ENCODE measurements at regions of chr17 and their contacts with region 1.

Region 1: GRCh38 chr17:7561028-7561575 is 617 bp upstream of the SENP3 start:
- H3K4me3 Mint-ChIP-seq: peak overlapping the region; percentile 97
- H3K27ac Mint-ChIP-seq: peak overlapping the region; percentile 96
- H3K4me1 Mint-ChIP-seq: peaks cover 86% of the 10 kb centered on the region
- H3K27me3 Mint-ChIP-seq: no peaks in the 10 kb centered on the region

Region 2: GRCh38 chr17:7435221-7435675 is 125.9 kb before region 1 on chr17 and contains the start of gene TMEM102:
- intact Hi-C with region 1: loop called (anchors 2 kb)
- H3K4me3 Mint-ChIP-seq: peak within 1 kb of the TSS; percentile 86
- H3K27ac Mint-ChIP-seq: peak within 1 kb of the TSS; percentile 90
- H3K4me1 Mint-ChIP-seq: peaks cover 39% of the 10 kb centered on the region
- H3K27me3 Mint-ChIP-seq: peaks cover 23% of the 10 kb centered on the region

Region 3: GRCh38 chr17:7515911-7516610 is 45.0 kb before region 1 on chr17:
- intact Hi-C with region 1: loop called (anchors 1 kb)
- H3K4me3 Mint-ChIP-seq: no peak overlapping the region
- H3K27ac Mint-ChIP-seq: peak overlapping the region; percentile 46
- H3K4me1 Mint-ChIP-seq: peaks cover 40% of the 10 kb centered on the region
- H3K27me3 Mint-ChIP-seq: no peaks in the 10 kb centered on the region

Region 4: DNA sequence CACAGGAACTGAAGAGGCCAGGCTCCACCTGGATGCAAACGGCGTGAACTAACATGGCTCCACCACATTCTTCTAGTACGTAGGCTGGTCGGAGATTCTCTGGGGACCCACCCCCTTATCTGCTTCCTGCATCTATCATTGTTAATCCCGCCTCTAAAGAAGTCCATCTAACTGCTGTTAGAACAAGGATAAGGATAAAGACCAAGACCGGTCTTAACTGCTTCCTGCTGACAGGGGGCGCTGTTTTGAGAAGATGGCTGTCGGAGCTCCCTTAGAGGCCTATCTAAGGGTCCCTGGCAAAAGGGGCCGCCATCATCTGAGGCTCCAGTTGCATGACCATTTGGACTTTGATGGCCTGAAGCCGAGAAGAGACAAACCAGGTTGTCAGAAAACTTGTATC is 38.1 kb before region 1 on chr17:
- intact Hi-C with region 1: loop called (anchors 1 kb)
- H3K4me3 Mint-ChIP-seq: no peak overlapping the region
- H3K27ac Mint-ChIP-seq: no peak overlapping the region
- H3K4me1 Mint-ChIP-seq: peaks cover 7% of the 10 kb centered on the region
- H3K27me3 Mint-ChIP-seq: no peaks in the 10 kb centered on the region

Region 5: GRCh38 chr17:7572588-7573323 is 11.7 kb after region 1 on chr17:
- intact Hi-C with region 1: loop called (anchors 1 kb)
- H3K4me3 Mint-ChIP-seq: peak overlapping the region; percentile 85
- H3K27ac Mint-ChIP-seq: peak overlapping the region; percentile 95
- H3K4me1 Mint-ChIP-seq: peaks cover 80% of the 10 kb centered on the region
- H3K27me3 Mint-ChIP-seq: no peaks in the 10 kb centered on the region